ENCODE measurements at regions of chr5 and their contacts with region 1.

Region 1: GRCh38 chr5:83473346-83474163 is 2.0 kb downstream of the VCAN start:
- DNase-seq: peak; percentile 78 to 81
- H3K4me3 ChIP-seq: peak overlapping the region; percentile 50
- H3K4me3 Mint-ChIP-seq: peak overlapping the region; percentile 83
- H3K27ac Mint-ChIP-seq: peak overlapping the region; percentile 53
- H3K4me1 ChIP-seq: peaks cover 25% of the 10 kb centered on the region
- H3K4me1 Mint-ChIP-seq: peaks cover 30% of the 10 kb centered on the region
- H3K27me3 ChIP-seq: no peaks in the 10 kb centered on the region
- H3K27me3 Mint-ChIP-seq: peaks cover 7% of the 10 kb centered on the region
- CTCF ChIP-seq: peak; percentile 57 to 68

Region 2: GRCh38 chr5:82387001-82387818 is 1086.3 kb before region 1 on chr5:
- CTCF ChIA-PET with region 1: no interaction called
- POLR2A ChIA-PET with region 1: no interaction called
- intact Hi-C with region 1: loop called (anchors 2 kb)
- DNase-seq: peak; percentile 85 to 88
- H3K4me3 ChIP-seq: no peak overlapping the region
- H3K4me3 Mint-ChIP-seq: peak overlapping the region; percentile 54
- H3K27ac Mint-ChIP-seq: peak overlapping the region; percentile 73
- H3K4me1 ChIP-seq: peaks cover 23% of the 10 kb centered on the region
- H3K4me1 Mint-ChIP-seq: peaks cover 39% of the 10 kb centered on the region
- H3K27me3 ChIP-seq: no peaks in the 10 kb centered on the region
- H3K27me3 Mint-ChIP-seq: no peaks in the 10 kb centered on the region
- CTCF ChIP-seq: no peak

Region 3: GRCh38 chr5:83076742-83077661 is 396.6 kb before region 1 on chr5 and contains the starts of genes TMEM167A and XRCC4:
- CTCF ChIA-PET with region 1: no interaction called
- POLR2A ChIA-PET with region 1: no interaction called
- intact Hi-C with region 1: loop called (anchors 5 kb)
- DNase-seq: peak; percentile 96 to 98
- H3K4me3 ChIP-seq: peak within 1 kb of the TSS; percentile 94
- H3K4me3 Mint-ChIP-seq: peak within 1 kb of the TSS; percentile 99
- H3K27ac Mint-ChIP-seq: peak within 1 kb of the TSS; percentile 100
- H3K4me1 ChIP-seq: peaks cover 4% of the 10 kb centered on the region; the same call in 1 of the 2 replicates
- H3K4me1 Mint-ChIP-seq: no peaks in the 10 kb centered on the region
- H3K27me3 ChIP-seq: no peaks in the 10 kb centered on the region
- H3K27me3 Mint-ChIP-seq: no peaks in the 10 kb centered on the region
- CTCF ChIP-seq: no peak
- total RNA-seq, gene TMEM167A: 85.0 and 97.1 TPM in 2 replicates
- total RNA-seq, gene XRCC4: 13.0 and 13.5 TPM in 2 replicates

Region 4: GRCh38 chr5:83430130-83431010 is 43.2 kb before region 1 on chr5:
- CTCF ChIA-PET with region 1: no interaction called
- POLR2A ChIA-PET with region 1: no interaction called
- intact Hi-C with region 1: loop called (anchors 5 kb)
- DNase-seq: peak; percentile 58 to 73
- H3K4me3 ChIP-seq: no peak overlapping the region
- H3K4me3 Mint-ChIP-seq: no peak overlapping the region
- H3K27ac Mint-ChIP-seq: no peak overlapping the region
- H3K4me1 ChIP-seq: 0 out of 2 replicates have a peak, but pooled peaks cover 4% of the 10 kb centered on the region
- H3K4me1 Mint-ChIP-seq: no peaks in the 10 kb centered on the region
- H3K27me3 ChIP-seq: no peaks in the 10 kb centered on the region
- H3K27me3 Mint-ChIP-seq: peaks cover 3% of the 10 kb centered on the region
- CTCF ChIP-seq: peak; percentile 88 to 95

Region 5: GRCh38 chr5:83509540-83509939 is 36.0 kb after region 1 on chr5:
- CTCF ChIA-PET with region 1: no interaction called
- POLR2A ChIA-PET with region 1: no interaction called
- intact Hi-C with region 1: no loop called
- DNase-seq: no peak
- H3K4me3 ChIP-seq: no peak overlapping the region
- H3K4me3 Mint-ChIP-seq: no peak overlapping the region
- H3K27ac Mint-ChIP-seq: no peak overlapping the region
- H3K4me1 ChIP-seq: no peaks in the 10 kb centered on the region
- H3K4me1 Mint-ChIP-seq: peaks cover 8% of the 10 kb centered on the region
- H3K27me3 ChIP-seq: no peaks in the 10 kb centered on the region
- H3K27me3 Mint-ChIP-seq: no peaks in the 10 kb centered on the region
- CTCF ChIP-seq: no peak

Region 6: GRCh38 chr5:83577036-83577636 is 103.6 kb after region 1 on chr5:
- CTCF ChIA-PET with region 1: no interaction called
- POLR2A ChIA-PET with region 1: no interaction called
- intact Hi-C with region 1: loop called (anchors 5 kb)
- DNase-seq: peak; percentile 82 to 89
- H3K4me3 ChIP-seq: no peak overlapping the region
- H3K4me3 Mint-ChIP-seq: peak overlapping the region; percentile 65
- H3K27ac Mint-ChIP-seq: peak overlapping the region; percentile 68
- H3K4me1 ChIP-seq: peaks cover 16% of the 10 kb centered on the region
- H3K4me1 Mint-ChIP-seq: peaks cover 20% of the 10 kb centered on the region
- H3K27me3 ChIP-seq: no peaks in the 10 kb centered on the region
- H3K27me3 Mint-ChIP-seq: no peaks in the 10 kb centered on the region
- CTCF ChIP-seq: no peak

Measured in Caco-2 (cell line).